ENCODE measurements at regions of chr6 and their contacts with region 1.

Region 1: DNA sequence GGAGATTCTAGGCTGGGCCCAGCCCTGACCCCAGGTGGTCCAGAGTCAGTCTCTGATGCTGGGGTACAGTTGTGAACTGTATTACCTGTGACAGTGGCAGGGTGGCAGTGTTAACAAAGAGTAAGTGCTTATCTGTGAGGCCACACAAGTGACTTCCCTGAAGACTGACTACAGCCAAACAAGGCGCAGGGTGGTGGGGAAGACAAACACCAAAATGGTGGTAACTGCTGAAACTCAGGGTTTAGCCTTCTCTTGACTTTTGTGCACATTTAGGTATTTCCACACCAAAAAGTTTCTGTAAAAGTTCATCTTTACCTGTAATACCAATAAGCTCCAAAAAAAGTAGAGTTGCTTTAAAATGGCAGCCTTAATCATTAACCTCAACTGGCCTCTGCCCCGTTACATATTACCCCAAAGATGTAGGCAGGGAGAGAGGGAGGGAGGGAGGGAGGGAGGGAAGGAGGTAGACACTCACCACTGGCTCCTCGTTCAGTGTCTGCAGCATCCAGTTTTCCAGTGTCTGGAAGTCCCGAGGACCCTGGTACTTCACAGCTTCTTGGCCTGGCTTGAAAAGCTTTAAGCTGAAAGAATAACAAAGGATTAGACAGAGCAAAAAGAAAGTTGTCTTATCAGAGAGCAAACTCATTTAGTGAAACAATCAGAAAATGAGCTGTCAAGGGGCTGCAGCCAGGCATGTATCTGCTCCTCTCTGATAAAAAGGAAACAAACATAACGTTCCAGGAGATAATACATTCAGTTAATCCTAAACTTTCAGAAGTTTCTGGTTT is 11.3 kb downstream of the TXNDC5 start:
- DNase-seq: peak; percentile 32 to 44
- H3K4me3 ChIP-seq: no peak overlapping the region
- H3K4me3 Mint-ChIP-seq: no peak overlapping the region
- H3K27ac Mint-ChIP-seq: no peak overlapping the region
- H3K4me1 ChIP-seq: peaks cover 10% of the 10 kb centered on the region
- H3K4me1 Mint-ChIP-seq: no peaks in the 10 kb centered on the region
- H3K27me3 ChIP-seq: no peaks in the 10 kb centered on the region
- H3K27me3 Mint-ChIP-seq: no peaks in the 10 kb centered on the region
- CTCF ChIP-seq: peak in 1 of 2 experiments; percentile 28

Region 2: GRCh38 chr6:7865781-7866180 is 33.5 kb before region 1 on chr6:
- CTCF ChIA-PET with region 1: no interaction called
- POLR2A ChIA-PET with region 1: no interaction called
- intact Hi-C with region 1: no loop called
- DNase-seq: no peak
- H3K4me3 ChIP-seq: no peak overlapping the region
- H3K4me3 Mint-ChIP-seq: no peak overlapping the region
- H3K27ac Mint-ChIP-seq: no peak overlapping the region
- H3K4me1 ChIP-seq: no peaks in the 10 kb centered on the region
- H3K4me1 Mint-ChIP-seq: no peaks in the 10 kb centered on the region
- H3K27me3 ChIP-seq: no peaks in the 10 kb centered on the region
- H3K27me3 Mint-ChIP-seq: no peaks in the 10 kb centered on the region
- CTCF ChIP-seq: no peak

Region 3: GRCh38 chr6:7992002-7992815 is 92.9 kb after region 1 on chr6:
- CTCF ChIA-PET with region 1: no interaction called
- POLR2A ChIA-PET with region 1: no interaction called
- intact Hi-C with region 1: loop called (anchors 1 kb)
- DNase-seq: peak in 1 of 2 experiments; percentile 36
- H3K4me3 ChIP-seq: no peak overlapping the region
- H3K4me3 Mint-ChIP-seq: no peak overlapping the region
- H3K27ac Mint-ChIP-seq: no peak overlapping the region
- H3K4me1 ChIP-seq: peaks cover 3% of the 10 kb centered on the region
- H3K4me1 Mint-ChIP-seq: peaks cover 7% of the 10 kb centered on the region
- H3K27me3 ChIP-seq: no peaks in the 10 kb centered on the region
- H3K27me3 Mint-ChIP-seq: no peaks in the 10 kb centered on the region
- CTCF ChIP-seq: peak in 1 of 2 experiments; percentile 47

Region 4: DNA sequence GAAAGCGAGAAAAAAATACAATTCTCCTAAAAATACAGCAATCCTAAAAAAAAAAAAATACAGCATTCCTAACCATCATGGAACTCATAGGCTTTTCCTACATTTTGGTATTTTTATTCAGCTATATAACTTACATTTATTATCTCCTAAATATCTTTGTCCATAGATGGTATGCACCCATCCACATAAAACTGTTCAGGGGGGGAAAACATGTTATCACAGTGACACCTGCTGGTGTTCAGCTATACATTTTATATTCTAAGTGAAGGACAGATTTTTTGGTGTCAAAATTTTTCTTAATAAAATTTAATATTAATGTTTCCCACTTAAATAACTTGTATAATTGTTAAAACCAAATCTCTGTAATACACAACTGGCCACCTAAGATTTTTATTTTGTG is 106.9 kb after region 1 on chr6:
- CTCF ChIA-PET with region 1: interaction called, 3 read pairs
- POLR2A ChIA-PET with region 1: no interaction called
- intact Hi-C with region 1: loop called (anchors 1 kb)
- DNase-seq: peak in 1 of 2 experiments; percentile 28
- H3K4me3 ChIP-seq: no peak overlapping the region
- H3K4me3 Mint-ChIP-seq: no peak overlapping the region
- H3K27ac Mint-ChIP-seq: no peak overlapping the region
- H3K4me1 ChIP-seq: no peaks in the 10 kb centered on the region; the same call in 1 of the 2 replicates
- H3K4me1 Mint-ChIP-seq: peaks cover 4% of the 10 kb centered on the region
- H3K27me3 ChIP-seq: no peaks in the 10 kb centered on the region
- H3K27me3 Mint-ChIP-seq: no peaks in the 10 kb centered on the region
- CTCF ChIP-seq: peak in 1 of 2 experiments; percentile 46

Region 5: GRCh38 chr6:8113131-8113654 is 213.9 kb after region 1 on chr6:
- CTCF ChIA-PET with region 1: no interaction called
- POLR2A ChIA-PET with region 1: no interaction called
- intact Hi-C with region 1: no loop called
- DNase-seq: no peak
- H3K4me3 ChIP-seq: no peak overlapping the region
- H3K4me3 Mint-ChIP-seq: no peak overlapping the region
- H3K27ac Mint-ChIP-seq: no peak overlapping the region
- H3K4me1 ChIP-seq: no peaks in the 10 kb centered on the region; the same call in 1 of the 2 replicates
- H3K4me1 Mint-ChIP-seq: peaks cover 10% of the 10 kb centered on the region
- H3K27me3 ChIP-seq: no peaks in the 10 kb centered on the region
- H3K27me3 Mint-ChIP-seq: no peaks in the 10 kb centered on the region
- CTCF ChIP-seq: no peak

Region 6: GRCh38 chr6:8137529-8137939 is 238.2 kb after region 1 on chr6:
- CTCF ChIA-PET with region 1: no interaction called
- POLR2A ChIA-PET with region 1: no interaction called
- intact Hi-C with region 1: no loop called
- DNase-seq: no peak
- H3K4me3 ChIP-seq: no peak overlapping the region
- H3K4me3 Mint-ChIP-seq: no peak overlapping the region
- H3K27ac Mint-ChIP-seq: no peak overlapping the region
- H3K4me1 ChIP-seq: peaks cover 12% of the 10 kb centered on the region
- H3K4me1 Mint-ChIP-seq: no peaks in the 10 kb centered on the region
- H3K27me3 ChIP-seq: no peaks in the 10 kb centered on the region
- H3K27me3 Mint-ChIP-seq: no peaks in the 10 kb centered on the region
- CTCF ChIP-seq: no peak

Measured in Caco-2 (cell line).